CD4-positive, alpha-beta memory T cell (primary cell): ENCODE measurements at regions of chr1 and their contacts with region 1.

Region 1: DNA sequence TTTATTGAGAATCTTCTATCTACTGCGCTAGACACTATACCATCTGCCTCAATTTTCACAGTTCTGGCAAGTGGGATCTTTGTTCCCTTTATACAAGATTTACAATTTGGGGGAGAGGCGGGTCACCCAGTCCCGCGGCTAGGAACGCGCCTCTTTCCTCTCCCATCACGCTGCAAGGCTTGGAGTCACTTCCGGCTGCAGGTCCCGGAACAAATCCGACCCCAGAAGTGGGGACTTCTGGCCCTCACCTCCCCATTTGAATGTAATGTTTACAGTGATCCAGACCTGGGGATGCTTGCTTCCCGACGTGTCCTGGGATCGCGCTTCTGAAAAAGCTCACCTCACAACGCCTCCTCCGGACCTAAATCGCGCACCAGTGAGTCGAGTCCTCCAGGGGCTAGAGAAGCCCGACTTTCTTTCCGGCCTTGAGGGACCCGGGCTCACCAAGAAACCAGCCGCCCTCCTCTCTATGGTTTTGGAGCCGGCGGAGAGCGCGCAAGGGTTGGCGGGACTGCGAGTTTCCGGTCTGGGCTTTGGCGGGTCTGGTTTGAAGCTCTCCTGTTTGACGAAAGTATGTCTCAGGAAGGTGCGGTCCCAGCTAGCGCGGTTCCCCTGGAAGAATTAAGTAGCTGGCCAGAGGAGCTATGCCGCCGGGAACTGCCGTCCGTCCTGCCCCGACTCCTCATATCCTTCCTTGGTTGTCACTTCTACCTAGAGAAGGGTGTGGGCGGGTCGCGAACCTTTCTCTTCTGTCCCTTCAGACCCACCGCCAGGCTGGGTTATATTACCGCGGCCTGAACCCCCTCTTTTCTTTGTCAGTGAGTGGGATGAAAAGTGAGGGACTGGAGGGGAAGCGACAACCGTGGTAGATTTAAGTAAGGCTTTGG is at the start of gene METTL18:
- DNase-seq: peak; percentile 92 to 95 (median 93)
- H3K4me3 ChIP-seq: peak within 1 kb of the TSS; percentile 90 to 93
- H3K4me3 Mint-ChIP-seq: peak within 1 kb of the TSS; percentile 96 to 100 (median 98)
- H3K27ac ChIP-seq: peak within 1 kb of the TSS; percentile 93
- H3K27ac Mint-ChIP-seq: peak within 1 kb of the TSS; percentile 90 to 100 (median 99)
- H3K4me1 ChIP-seq: peaks cover 30% of the 10 kb centered on the region
- H3K4me1 Mint-ChIP-seq: peaks cover 36 to 56% (median 48%) of the 10 kb centered on the region in 4 donors
- H3K27me3 ChIP-seq: no peaks in the 10 kb centered on the region
- H3K27me3 Mint-ChIP-seq: no peaks in the 10 kb centered on the region
- total RNA-seq, gene METTL18: 21.0 to 23.8 TPM

Region 2: GRCh38 chr1:168178638-168179437 is 1615.9 kb before region 1 on chr1 and contains the start of gene TIPRL:
- CTCF ChIA-PET with region 1: no interaction called
- POLR2A ChIA-PET with region 1: no interaction called
- intact Hi-C with region 1: loop called (anchors 10 kb)
- DNase-seq: peak; percentile 93 to 94 (median 94)
- H3K4me3 ChIP-seq: peak within 1 kb of the TSS; percentile 86 to 99
- H3K4me3 Mint-ChIP-seq: peak within 1 kb of the TSS in 2 of 8 donors; percentile 18 to 26
- H3K27ac ChIP-seq: peak within 1 kb of the TSS; percentile 95
- H3K27ac Mint-ChIP-seq: no peak within 1 kb of the TSS
- H3K4me1 ChIP-seq: peaks cover 24% of the 10 kb centered on the region
- H3K4me1 Mint-ChIP-seq: peaks cover 3 to 17% (median 9%) of the 10 kb centered on the region in 4 donors
- H3K27me3 ChIP-seq: no peaks in the 10 kb centered on the region
- H3K27me3 Mint-ChIP-seq: no peaks in the 10 kb centered on the region
- total RNA-seq, gene TIPRL: 23.8 to 28.3 TPM

Region 3: GRCh38 chr1:169106095-169106920 is 688.5 kb before region 1 on chr1 and contains the start of gene ATP1B1:
- CTCF ChIA-PET with region 1: no interaction called
- POLR2A ChIA-PET with region 1: interaction called, 3 read pairs
- intact Hi-C with region 1: loop called (anchors 5 kb)
- DNase-seq: peak; percentile 72 to 84 (median 78)
- H3K4me3 ChIP-seq: peak within 1 kb of the TSS; percentile 57 to 70
- H3K4me3 Mint-ChIP-seq: peak within 1 kb of the TSS; percentile 78 to 97 (median 90)
- H3K27ac ChIP-seq: peak within 1 kb of the TSS; percentile 23
- H3K27ac Mint-ChIP-seq: peak within 1 kb of the TSS; percentile 58 to 88 (median 78)
- H3K4me1 ChIP-seq: peaks cover 27% of the 10 kb centered on the region
- H3K4me1 Mint-ChIP-seq: peaks cover 20 to 49% (median 34%) of the 10 kb centered on the region in 4 donors
- H3K27me3 ChIP-seq: no peaks in the 10 kb centered on the region
- H3K27me3 Mint-ChIP-seq: peaks cover 2 to 4% of the 10 kb centered on the region in 2 donors
- total RNA-seq, gene ATP1B1: 3.3 to 3.5 TPM

Region 4: GRCh38 chr1:169367486-169368405 is 427.0 kb before region 1 on chr1 and contains the starts of genes BLZF1 and NME7:
- CTCF ChIA-PET with region 1: no interaction called
- POLR2A ChIA-PET with region 1: interaction called, 10 read pairs
- intact Hi-C with region 1: loop called (anchors 1 kb)
- DNase-seq: peak; percentile 95 to 99 (median 98)
- H3K4me3 ChIP-seq: peak within 1 kb of the TSS; percentile 96
- H3K4me3 Mint-ChIP-seq: peak within 1 kb of the TSS in 3 of 8 donors; percentile 16 to 51 (median 24)
- H3K27ac ChIP-seq: peak within 1 kb of the TSS; percentile 71
- H3K27ac Mint-ChIP-seq: peak within 1 kb of the TSS in 3 of 7 donors; percentile 25 to 54 (median 33)
- H3K4me1 ChIP-seq: peaks cover 44% of the 10 kb centered on the region
- H3K4me1 Mint-ChIP-seq: peaks cover 22 to 31% (median 23%) of the 10 kb centered on the region in 4 donors
- H3K27me3 ChIP-seq: no peaks in the 10 kb centered on the region
- H3K27me3 Mint-ChIP-seq: no peaks in the 10 kb centered on the region
- total RNA-seq, gene BLZF1: 20.0 to 23.8 TPM
- total RNA-seq, gene NME7: 12.0 to 14.3 TPM

Region 5: DNA sequence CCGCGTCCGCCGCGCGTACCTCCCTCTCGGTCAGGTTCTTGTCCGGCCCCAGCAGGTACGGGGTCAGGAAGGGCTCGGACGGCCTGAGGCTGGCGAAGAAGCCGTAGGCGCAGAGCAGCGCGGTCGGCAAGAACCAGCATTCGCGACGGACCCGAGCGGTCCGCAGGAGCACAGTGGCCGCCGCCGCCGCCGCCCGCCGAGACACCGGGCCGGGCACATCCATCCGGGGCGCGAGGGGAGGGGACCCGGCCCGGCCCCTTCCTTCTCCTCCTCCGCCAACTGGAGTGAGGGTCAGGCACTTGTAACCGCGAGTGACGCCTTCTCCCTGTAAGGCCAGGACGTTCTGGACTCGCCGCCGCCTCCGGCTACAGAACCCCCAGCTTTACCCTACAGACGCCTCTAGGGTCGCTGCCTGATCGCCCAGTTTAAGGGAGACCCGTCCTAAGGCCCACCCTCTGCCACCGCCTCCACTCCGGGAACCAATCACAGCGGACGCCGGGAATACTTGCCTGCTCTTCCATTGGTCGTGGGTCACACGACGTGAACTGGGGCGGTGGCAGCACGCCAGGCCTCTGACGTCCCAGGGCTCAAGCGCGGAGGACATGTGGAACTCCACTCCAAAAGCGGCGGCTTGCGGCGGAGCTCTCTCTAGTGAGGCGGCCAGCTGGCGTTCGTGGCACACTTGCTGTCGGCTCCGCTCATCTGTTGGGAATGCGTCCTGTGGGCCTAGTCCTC is 309.1 kb before region 1 on chr1 and contains the start of gene SLC19A2:
- CTCF ChIA-PET with region 1: no interaction called
- POLR2A ChIA-PET with region 1: no interaction called
- intact Hi-C with region 1: loop called (anchors 1 kb)
- DNase-seq: peak; percentile 89 to 96 (median 91)
- H3K4me3 ChIP-seq: peak within 1 kb of the TSS; percentile 60 to 63
- H3K4me3 Mint-ChIP-seq: peak within 1 kb of the TSS; percentile 93 to 97 (median 95)
- H3K27ac ChIP-seq: peak within 1 kb of the TSS; percentile 73
- H3K27ac Mint-ChIP-seq: peak within 1 kb of the TSS; percentile 88 to 96 (median 94)
- H3K4me1 ChIP-seq: peaks cover 20% of the 10 kb centered on the region
- H3K4me1 Mint-ChIP-seq: peaks cover 28 to 37% (median 30%) of the 10 kb centered on the region in 4 donors
- H3K27me3 ChIP-seq: no peaks in the 10 kb centered on the region
- H3K27me3 Mint-ChIP-seq: no peaks in the 10 kb centered on the region
- total RNA-seq, gene SLC19A2: 4.1 to 4.5 TPM

Region 6: DNA sequence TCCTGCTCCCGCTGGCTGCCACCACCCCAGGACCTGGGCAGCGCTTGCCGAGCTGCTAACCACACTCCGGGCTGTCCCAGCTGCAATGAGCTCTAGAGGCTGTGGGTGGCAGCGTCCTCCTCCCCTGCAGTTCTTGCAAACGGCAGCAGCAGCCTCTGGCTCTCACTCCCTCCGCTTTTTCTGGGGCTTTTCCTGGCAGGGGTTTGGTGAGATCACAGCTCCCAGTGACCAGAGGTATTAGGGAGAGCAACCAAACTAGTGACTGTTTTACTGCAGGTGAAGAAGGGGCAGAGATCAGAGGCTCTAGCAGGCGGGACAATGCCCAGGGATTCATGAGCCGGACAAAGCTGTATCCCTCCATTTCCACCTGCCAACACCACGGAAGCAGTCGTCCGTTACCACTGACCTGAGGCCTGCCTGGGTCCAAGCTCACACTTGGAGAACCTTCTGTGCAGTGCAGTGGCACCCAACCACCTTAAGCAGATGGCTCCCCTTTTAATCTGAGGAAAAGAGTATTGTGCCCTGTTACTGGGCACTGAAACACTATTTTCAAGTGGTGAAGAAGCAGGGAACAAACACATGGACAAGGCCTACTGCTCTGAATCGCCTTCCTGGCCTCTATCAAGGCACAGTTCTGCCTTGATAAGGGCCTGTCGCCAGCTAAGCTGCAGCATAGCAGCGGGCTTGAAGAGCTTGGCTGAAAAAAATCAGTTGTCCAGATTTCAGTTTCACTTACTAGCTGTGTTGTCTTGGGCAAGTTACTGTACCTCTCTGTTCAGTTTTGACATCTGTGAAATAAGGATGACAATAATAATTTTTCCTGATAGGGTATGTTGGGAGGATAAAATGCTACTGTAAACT is 208.1 kb before region 1 on chr1 and contains the start of gene F5:
- CTCF ChIA-PET with region 1: interaction called, 8 read pairs
- POLR2A ChIA-PET with region 1: no interaction called
- intact Hi-C with region 1: loop called (anchors 1 kb)
- DNase-seq: peak; percentile 67 to 78 (median 72)
- H3K4me3 ChIP-seq: peak within 1 kb of the TSS; percentile 47 to 62
- H3K4me3 Mint-ChIP-seq: peak within 1 kb of the TSS; percentile 86 to 94 (median 89)
- H3K27ac ChIP-seq: peak within 1 kb of the TSS; percentile 36
- H3K27ac Mint-ChIP-seq: peak within 1 kb of the TSS; percentile 58 to 95 (median 74)
- H3K4me1 ChIP-seq: peaks cover 52% of the 10 kb centered on the region
- H3K4me1 Mint-ChIP-seq: peaks cover 15 to 51% (median 37%) of the 10 kb centered on the region in 4 donors
- H3K27me3 ChIP-seq: no peaks in the 10 kb centered on the region
- H3K27me3 Mint-ChIP-seq: peaks cover 2 to 11% of the 10 kb centered on the region in 2 donors
- total RNA-seq, gene F5: 4.9 to 6.1 TPM

Region 7: DNA sequence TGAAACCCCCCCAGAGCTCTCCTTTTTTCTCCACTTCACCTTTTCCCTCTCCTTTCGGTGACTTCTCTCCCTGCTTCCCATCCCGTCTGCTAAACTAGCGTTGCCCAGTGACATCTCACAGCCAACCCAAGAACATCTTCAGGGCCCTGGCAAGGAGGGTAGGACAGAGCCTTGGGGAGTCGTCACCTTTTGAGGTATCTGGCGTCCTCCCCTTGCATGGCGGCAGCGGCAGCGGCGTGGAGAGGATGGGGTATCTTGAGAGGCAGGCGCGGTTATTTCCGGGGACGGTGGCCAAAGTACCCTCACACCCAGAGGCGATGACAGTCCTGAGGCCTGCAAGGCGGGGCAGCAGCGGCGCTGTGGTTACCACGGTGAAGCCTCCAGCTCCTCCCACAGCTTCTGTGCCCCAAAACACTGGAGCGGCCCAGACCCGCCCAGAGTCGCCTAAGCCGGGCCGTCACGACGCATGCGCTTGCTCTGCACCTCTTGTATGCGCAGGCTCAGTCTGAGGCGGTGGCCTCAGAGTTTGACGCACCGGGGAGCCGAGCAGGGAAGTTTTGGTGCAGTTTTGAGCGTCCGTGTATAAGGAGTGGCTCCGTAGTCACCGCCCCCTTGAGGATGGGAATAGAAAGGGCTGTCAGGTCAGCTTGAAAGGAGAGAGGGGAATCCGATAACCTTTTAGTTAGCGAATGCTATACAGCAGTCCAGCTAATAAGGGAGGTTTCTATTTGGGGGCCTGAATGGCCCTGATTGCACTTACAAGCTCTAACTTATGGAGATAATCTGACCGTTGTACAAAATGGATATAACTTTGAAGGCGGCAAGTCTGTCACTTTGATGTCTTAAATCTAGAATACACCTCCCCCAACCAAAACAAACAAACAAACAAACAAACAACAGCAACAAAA is 279.7 kb after region 1 on chr1 and contains the start of gene KIFAP3:
- CTCF ChIA-PET with region 1: no interaction called
- POLR2A ChIA-PET with region 1: no interaction called
- intact Hi-C with region 1: loop called (anchors 10 kb)
- DNase-seq: peak; percentile 93 to 97 (median 95)
- H3K4me3 ChIP-seq: peak within 1 kb of the TSS; percentile 71 to 77
- H3K4me3 Mint-ChIP-seq: peak within 1 kb of the TSS; percentile 90 to 98 (median 96)
- H3K27ac ChIP-seq: peak within 1 kb of the TSS; percentile 74
- H3K27ac Mint-ChIP-seq: peak within 1 kb of the TSS; percentile 85 to 99 (median 97)
- H3K4me1 ChIP-seq: peaks cover 44% of the 10 kb centered on the region
- H3K4me1 Mint-ChIP-seq: peaks cover 39 to 61% (median 47%) of the 10 kb centered on the region in 4 donors
- H3K27me3 ChIP-seq: no peaks in the 10 kb centered on the region
- H3K27me3 Mint-ChIP-seq: peaks cover 0 to 2% of the 10 kb centered on the region in 2 donors
- total RNA-seq, gene KIFAP3: 20.2 to 22.2 TPM